Dendritic cell treated with granulocyte-macrophage colony-stimulating factor and Interleukin-4, amounts not matched to agents 40 ng/mL and 50 ng/mL, for 4 days (primary cell): ENCODE measurements at regions of chr2 and their contacts with region 1.

Region 1: DNA sequence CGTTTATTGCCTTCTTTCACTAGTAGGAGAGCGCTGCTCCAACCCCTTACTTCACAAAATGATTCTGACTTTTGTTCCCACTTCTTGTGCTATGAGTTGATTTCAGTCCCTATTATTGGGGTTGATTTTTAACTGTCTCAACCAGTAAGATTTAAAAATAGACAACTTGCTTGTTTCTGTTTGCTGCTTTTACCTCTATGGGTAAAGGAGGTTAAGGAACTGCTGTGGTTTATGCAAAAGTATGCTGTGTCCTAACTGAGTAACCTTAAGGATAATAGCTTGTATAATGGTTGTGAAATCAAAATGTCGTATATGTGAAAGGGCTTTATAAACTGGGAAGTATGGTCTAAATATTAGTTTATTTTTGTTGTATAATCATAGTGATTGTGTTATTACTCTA is 22.6 kb downstream of the ALMS1 start:
- H3K4me3 Mint-ChIP-seq: no peak overlapping the region
- H3K27ac Mint-ChIP-seq: no peak overlapping the region
- H3K4me1 Mint-ChIP-seq: no peaks in the 10 kb centered on the region
- H3K27me3 Mint-ChIP-seq: no peaks in the 10 kb centered on the region

Region 2: GRCh38 chr2:73368781-73369180 is 39.4 kb before region 1 on chr2:
- intact Hi-C with region 1: loop called (anchors 5 kb)
- H3K4me3 Mint-ChIP-seq: no peak overlapping the region
- H3K27ac Mint-ChIP-seq: no peak overlapping the region
- H3K4me1 Mint-ChIP-seq: no peaks in the 10 kb centered on the region
- H3K27me3 Mint-ChIP-seq: peaks cover 11% of the 10 kb centered on the region